ENCODE measurements at regions of chr6 and their contacts with region 1.

Region 1: DNA sequence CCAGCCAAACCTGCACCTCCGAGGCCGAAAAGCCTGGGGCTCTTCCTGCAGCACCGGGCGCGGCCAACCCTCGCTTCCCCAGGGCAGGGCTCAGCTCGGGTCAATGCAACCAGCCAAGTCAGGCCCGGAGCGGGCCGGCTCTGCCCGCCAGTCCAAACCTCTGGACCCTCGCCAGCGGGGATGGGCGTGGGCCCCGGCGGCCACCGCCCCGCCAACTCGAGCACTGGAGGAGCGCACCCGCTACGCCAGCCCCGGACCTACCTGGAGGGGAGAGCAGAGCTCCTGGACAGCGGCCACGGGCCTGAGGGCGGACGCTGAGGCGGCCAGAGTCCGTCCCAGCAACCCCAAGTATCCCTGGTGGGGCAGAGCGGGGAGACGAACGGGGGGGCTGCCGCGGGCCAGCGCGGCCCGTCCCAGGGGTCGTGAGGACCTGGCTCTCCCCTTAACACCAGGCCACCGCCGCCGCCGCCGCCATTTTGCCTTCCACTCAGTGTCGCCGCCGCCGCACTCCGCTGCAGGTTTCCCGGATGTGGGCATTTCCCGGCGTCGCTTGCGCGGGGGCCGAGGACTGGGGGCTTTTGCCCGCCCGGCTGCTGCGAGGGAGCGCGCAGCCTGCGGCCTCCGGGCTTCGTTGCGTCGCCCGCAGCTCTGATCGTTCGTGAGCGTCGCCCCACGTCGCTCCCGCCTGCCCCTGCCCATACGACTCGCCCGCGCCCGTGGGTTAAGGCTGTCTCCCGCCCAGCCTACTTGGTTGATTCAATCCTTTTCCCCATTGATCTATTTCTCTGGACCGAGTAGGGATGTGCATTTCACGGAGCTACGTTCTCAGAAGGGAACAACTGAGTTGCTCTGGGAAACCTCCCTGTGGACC is at the start of gene LATS1:
- DNase-seq: peak; percentile 91
- H3K4me3 ChIP-seq: peak within 1 kb of the TSS; percentile 72 to 84 (median 78)
- H3K27ac ChIP-seq: peak within 1 kb of the TSS; percentile 96 to 99 (median 97)
- H3K4me1 ChIP-seq: peaks cover 4 to 36% (median 17%) of the 10 kb centered on the region in 4 donors
- H3K27me3 ChIP-seq: no peaks in the 10 kb centered on the region
- CTCF ChIP-seq: no peak
- EP300 ChIP-seq: no peak
- POLR2A ChIP-seq: peak; percentile 83
- total RNA-seq, gene LATS1: 13.1 to 28.4 (median 19.4) TPM

Region 2: DNA sequence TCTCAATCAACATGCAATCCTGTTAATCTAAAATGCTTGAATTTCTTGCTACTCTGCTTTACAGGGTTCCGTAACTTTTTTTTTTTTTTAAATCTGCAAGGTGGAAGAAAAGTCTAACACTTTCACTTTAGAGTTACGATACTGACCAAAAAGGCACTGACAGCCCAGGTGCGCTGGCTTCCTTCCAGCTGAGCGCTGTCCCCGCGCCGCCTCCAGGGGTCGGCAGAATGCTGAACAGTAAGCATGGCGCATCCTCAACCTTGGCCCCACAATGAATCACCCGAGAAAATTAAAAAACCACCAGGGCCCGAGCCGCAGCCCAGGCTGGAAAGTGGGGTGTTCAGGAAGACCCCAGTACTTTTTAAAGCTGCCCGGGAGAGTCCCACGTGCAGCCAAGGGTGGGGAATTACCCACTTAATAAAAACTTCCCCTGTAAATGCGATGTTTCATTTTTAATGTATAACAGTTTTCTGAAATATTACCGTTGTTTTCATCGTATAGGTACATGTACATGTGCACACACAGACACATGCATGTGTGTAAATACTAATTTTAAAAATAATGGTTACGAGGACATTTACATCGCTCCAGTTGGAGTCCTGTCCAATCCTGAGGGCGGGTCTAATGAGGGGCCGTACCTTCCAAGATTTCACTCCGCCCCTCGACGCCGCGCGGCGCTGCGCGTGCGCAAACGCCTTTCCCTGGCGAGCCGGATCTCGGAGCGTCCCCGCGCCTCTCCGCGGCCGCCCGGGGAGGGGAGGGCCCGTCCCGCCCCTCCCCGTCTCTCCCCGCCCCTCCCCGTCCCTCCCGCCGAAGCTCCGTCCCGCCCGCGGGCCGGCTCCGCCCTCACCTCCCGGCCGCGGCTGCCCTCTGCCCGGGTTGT is 152.1 kb before region 1 on chr6 and contains the start of gene GINM1:
- in situ Hi-C with region 1: loop called in 1 of 4 experiments (anchors 25 kb)
- intact Hi-C with region 1: no loop called
- DNase-seq: peak; percentile 97
- H3K4me3 ChIP-seq: peak within 1 kb of the TSS; percentile 70 to 94 (median 82)
- H3K27ac ChIP-seq: peak within 1 kb of the TSS; percentile 91 to 93 (median 92)
- H3K4me1 ChIP-seq: peaks cover 11 to 25% (median 16%) of the 10 kb centered on the region in 4 donors
- H3K27me3 ChIP-seq: peaks cover 4% of the 10 kb centered on the region
- CTCF ChIP-seq: peak; percentile 58 to 88 (median 64)
- EP300 ChIP-seq: no peak
- POLR2A ChIP-seq: no peak
- total RNA-seq, gene GINM1: 19.1 to 49.6 (median 35.9) TPM

Measured in transverse colon (tissue), 4 donors.